ENCODE measurements at regions of chr1 and their contacts with region 1.

Region 1: GRCh38 chr1:119675349-119676345 is 27.6 kb upstream of the ZNF697 start:
- DNase-seq: peak; percentile 84
- ATAC-seq: peak; percentile 88
- H3K4me3 Mint-ChIP-seq: peak overlapping the region; percentile 68
- H3K27ac Mint-ChIP-seq: peak overlapping the region; percentile 96
- H3K4me1 Mint-ChIP-seq: peaks cover 55% of the 10 kb centered on the region
- H3K27me3 Mint-ChIP-seq: no peaks in the 10 kb centered on the region
- CTCF ChIP-seq: peak; percentile 72

Region 2: DNA sequence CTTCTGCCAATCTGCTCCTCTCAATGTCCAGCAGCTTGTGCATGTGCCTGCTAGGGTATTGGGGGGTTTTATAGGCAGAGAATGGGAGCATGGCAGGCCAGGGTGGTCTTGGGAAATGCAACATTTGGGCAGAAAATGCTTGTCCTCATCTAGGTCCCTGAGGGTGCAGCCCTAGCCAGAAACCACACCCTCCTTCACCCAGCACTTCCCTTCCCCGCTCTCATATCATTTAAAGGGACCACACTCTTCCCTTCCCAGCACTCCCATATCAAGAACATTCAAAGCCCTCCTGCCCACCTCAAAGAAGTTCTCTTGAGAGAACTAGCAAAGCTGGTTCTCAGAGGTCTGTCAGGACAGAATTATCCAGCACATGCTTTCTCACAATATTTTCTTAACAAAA is 106.6 kb before region 1 on chr1:
- CTCF ChIA-PET with region 1: no interaction called
- POLR2A ChIA-PET with region 1: no interaction called
- DNase-seq: no peak
- ATAC-seq: no peak
- H3K4me3 Mint-ChIP-seq: no peak overlapping the region
- H3K27ac Mint-ChIP-seq: no peak overlapping the region
- H3K4me1 Mint-ChIP-seq: peaks cover 6% of the 10 kb centered on the region; the same call in 1 of the 2 replicates
- H3K27me3 Mint-ChIP-seq: 0 out of 2 replicates have a peak, but pooled peaks cover 9% of the 10 kb centered on the region
- CTCF ChIP-seq: no peak

Region 3: GRCh38 chr1:119639109-119639508 is 36.5 kb before region 1 on chr1:
- CTCF ChIA-PET with region 1: no interaction called
- POLR2A ChIA-PET with region 1: no interaction called
- DNase-seq: no peak
- ATAC-seq: no peak; the same call in 1 of the 2 replicates
- H3K4me3 Mint-ChIP-seq: no peak overlapping the region
- H3K27ac Mint-ChIP-seq: no peak overlapping the region
- H3K4me1 Mint-ChIP-seq: peaks cover 26% of the 10 kb centered on the region
- H3K27me3 Mint-ChIP-seq: no peaks in the 10 kb centered on the region
- CTCF ChIP-seq: no peak

Region 4: DNA sequence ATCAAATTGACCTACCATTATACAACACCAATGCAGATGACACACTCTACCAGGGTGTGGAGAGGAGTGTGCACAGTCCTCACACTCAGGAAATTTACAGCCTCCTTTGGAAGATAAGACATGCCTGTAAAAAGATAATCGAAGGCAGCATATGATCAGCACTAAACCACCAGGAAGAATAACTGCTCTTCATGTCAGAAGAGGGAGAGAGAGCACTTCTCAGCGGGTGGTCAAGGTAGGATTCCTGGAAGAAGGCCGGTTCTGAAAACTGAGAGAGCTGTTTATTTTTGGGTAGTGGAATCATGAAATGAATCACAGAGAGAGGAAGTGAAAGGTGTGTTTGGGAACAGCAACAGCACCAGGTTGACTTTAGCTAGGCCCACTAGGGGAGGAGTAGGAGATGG is 13.6 kb before region 1 on chr1:
- CTCF ChIA-PET with region 1: interaction called, 49 read pairs
- POLR2A ChIA-PET with region 1: no interaction called
- DNase-seq: no peak
- ATAC-seq: no peak
- H3K4me3 Mint-ChIP-seq: no peak overlapping the region
- H3K27ac Mint-ChIP-seq: no peak overlapping the region; the same call in 1 of the 2 replicates
- H3K4me1 Mint-ChIP-seq: peaks cover 29% of the 10 kb centered on the region
- H3K27me3 Mint-ChIP-seq: no peaks in the 10 kb centered on the region
- CTCF ChIP-seq: no peak

Region 5: GRCh38 chr1:119686649-119687048 is 11.0 kb after region 1 on chr1:
- CTCF ChIA-PET with region 1: interaction called, 46 read pairs
- POLR2A ChIA-PET with region 1: interaction called, 3 read pairs
- DNase-seq: no peak
- ATAC-seq: no peak
- H3K4me3 Mint-ChIP-seq: no peak overlapping the region
- H3K27ac Mint-ChIP-seq: peak overlapping the region; percentile 65; the same call in 1 of the 2 replicates
- H3K4me1 Mint-ChIP-seq: peaks cover 55% of the 10 kb centered on the region
- H3K27me3 Mint-ChIP-seq: no peaks in the 10 kb centered on the region
- CTCF ChIP-seq: no peak

Region 6: GRCh38 chr1:119711804-119712341 is 36.2 kb after region 1 on chr1 and contains the start of gene PHGDH:
- CTCF ChIA-PET with region 1: interaction called, 39 read pairs
- POLR2A ChIA-PET with region 1: interaction called, 19 read pairs
- DNase-seq: peak; percentile 78
- ATAC-seq: peak; percentile 73
- H3K4me3 Mint-ChIP-seq: peak within 1 kb of the TSS; percentile 98
- H3K27ac Mint-ChIP-seq: peak within 1 kb of the TSS; percentile 99
- H3K4me1 Mint-ChIP-seq: peaks cover 44% of the 10 kb centered on the region
- H3K27me3 Mint-ChIP-seq: no peaks in the 10 kb centered on the region; the same call in 1 of the 2 replicates
- CTCF ChIP-seq: no peak
- total RNA-seq, gene PHGDH: 592 to 630 TPM (median 618 TPM) in 3 replicates